Panc1 (cell line): ENCODE measurements at regions of chr1 and their contacts with region 1.

Region 1: DNA sequence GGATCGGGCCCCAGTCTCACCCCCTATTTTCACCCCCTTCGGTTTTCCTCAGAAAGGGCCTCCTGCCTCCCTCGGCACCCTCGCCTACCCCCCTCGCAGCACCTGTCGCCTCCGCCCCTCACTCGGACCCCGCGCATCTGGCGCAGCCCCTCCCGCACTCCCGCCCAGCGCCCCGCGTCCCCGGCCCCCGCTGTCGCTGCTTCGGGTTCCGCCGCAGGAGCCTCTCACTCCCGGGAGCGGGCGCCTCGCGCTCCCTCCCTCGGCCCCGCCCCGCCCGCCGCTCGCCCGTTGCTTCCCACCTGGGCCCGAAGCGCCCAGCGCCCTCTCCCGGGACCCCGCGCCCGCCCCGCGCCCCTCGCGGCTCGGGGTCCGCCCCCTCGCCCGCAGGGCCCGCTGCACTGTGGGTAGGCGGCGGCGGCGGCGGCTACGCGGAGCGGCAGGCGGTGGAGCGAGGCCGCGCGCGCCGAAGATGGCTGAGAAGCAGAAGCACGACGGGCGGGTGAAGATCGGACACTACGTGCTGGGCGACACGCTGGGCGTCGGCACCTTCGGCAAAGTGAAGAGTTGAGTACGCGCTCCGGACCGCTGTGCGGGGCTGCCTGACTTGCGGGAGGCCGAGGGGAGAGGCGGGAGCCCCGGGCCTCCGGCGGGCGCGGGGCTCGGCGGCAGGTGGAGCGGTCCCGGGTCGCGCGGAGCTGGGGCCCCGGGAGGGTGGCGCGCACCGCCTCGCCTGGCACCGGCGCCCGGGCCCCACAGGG is at the start of gene PRKAA2:
- DNase-seq: no peak
- ATAC-seq: peak; percentile 91
- H3K4me3 ChIP-seq: peak within 1 kb of the TSS; percentile 76 to 91
- H3K27ac ChIP-seq: peak within 1 kb of the TSS; percentile 89
- H3K4me1 ChIP-seq: peaks cover 11% of the 10 kb centered on the region
- H3K27me3 ChIP-seq: no peaks in the 10 kb centered on the region
- CTCF ChIP-seq: peak; percentile 27; the same call in 1 of the 2 replicates
- total RNA-seq, gene PRKAA2: 11.1 TPM

Region 2: GRCh38 chr1:56688506-56689026 is 43.5 kb after region 1 on chr1:
- CTCF ChIA-PET with region 1: no interaction called
- POLR2A ChIA-PET with region 1: no interaction called
- in situ Hi-C with region 1: no loop called
- intact Hi-C with region 1: loop called (anchors 5 kb)
- DNase-seq: peak; percentile 98
- ATAC-seq: peak; percentile 100
- H3K4me3 ChIP-seq: peak overlapping the region in 1 of 2 experiments; percentile 21; a peak in 2 of 4 replicates
- H3K27ac ChIP-seq: peak overlapping the region; percentile 94
- H3K4me1 ChIP-seq: peaks cover 18% of the 10 kb centered on the region
- H3K27me3 ChIP-seq: no peaks in the 10 kb centered on the region
- CTCF ChIP-seq: no peak

Region 3: DNA sequence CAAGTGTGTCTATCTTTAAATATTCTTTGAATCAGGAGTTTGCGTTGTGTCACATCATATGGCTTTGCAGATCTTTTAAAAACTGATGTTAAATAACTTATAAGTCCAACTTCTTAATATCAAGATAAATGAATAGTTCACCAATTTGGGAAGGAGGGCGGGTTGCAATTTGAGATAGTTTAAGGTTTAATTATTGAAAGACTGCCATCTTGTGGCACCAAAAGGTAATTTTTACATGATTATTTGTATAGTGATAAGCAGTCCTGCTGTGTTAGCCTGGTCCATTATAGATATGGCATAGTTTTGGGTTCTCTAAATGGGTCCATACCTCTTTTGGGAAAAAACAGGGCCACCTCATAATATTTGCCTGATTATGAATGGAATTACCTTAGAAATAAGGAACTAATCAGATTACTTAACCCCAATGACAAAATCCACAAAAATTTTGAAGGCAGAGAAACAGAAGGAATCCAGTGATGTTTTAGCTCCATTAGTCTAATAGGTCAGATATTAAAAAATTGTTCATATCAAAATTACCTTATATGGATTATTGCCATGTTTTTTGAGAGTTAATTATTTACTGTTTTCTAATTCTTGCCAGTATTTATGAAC is 64.3 kb after region 1 on chr1:
- CTCF ChIA-PET with region 1: no interaction called
- POLR2A ChIA-PET with region 1: no interaction called
- in situ Hi-C with region 1: no loop called
- intact Hi-C with region 1: loop called (anchors 5 kb)
- DNase-seq: peak; percentile 57
- ATAC-seq: peak; percentile 78
- H3K4me3 ChIP-seq: no peak overlapping the region
- H3K27ac ChIP-seq: no peak overlapping the region
- H3K4me1 ChIP-seq: peaks cover 7% of the 10 kb centered on the region
- H3K27me3 ChIP-seq: no peaks in the 10 kb centered on the region
- CTCF ChIP-seq: peak; percentile 59; the same call in 1 of the 2 replicates